HepG2 (cell line): ENCODE measurements at regions of chr15 and their contacts with region 1.

Region 1: GRCh38 chr15:71651750-71652186 is 158.6 kb upstream of the NR2E3 start:
- DNase-seq: peak; percentile 57
- ATAC-seq: peak; percentile 54; the same call in 2 of the 3 replicates
- H3K4me3 ChIP-seq: no peak overlapping the region; a peak in 1 of 6 replicates
- H3K27ac ChIP-seq: no peak overlapping the region
- H3K4me1 ChIP-seq: peaks cover 56% of the 10 kb centered on the region
- H3K27me3 ChIP-seq: peaks cover 0 to 8% of the 10 kb centered on the region in 2 experiments; a peak in 1 of 5 replicates
- CTCF ChIP-seq: peak; percentile 75
- EP300 ChIP-seq: no peak
- POLR2A ChIP-seq: no peak
- RAD21 ChIP-seq: peak; percentile 51

Region 2: GRCh38 chr15:71575474-71576045 is 76.2 kb before region 1 on chr15:
- CTCF ChIA-PET with region 1: interaction called, 3 read pairs
- POLR2A ChIA-PET with region 1: no interaction called
- in situ Hi-C with region 1: no loop called
- intact Hi-C with region 1: loop called (anchors 1 kb)
- DNase-seq: peak; percentile 10
- ATAC-seq: no peak
- H3K4me3 ChIP-seq: no peak overlapping the region
- H3K27ac ChIP-seq: no peak overlapping the region
- H3K4me1 ChIP-seq: no peaks in the 10 kb centered on the region
- H3K27me3 ChIP-seq: no peaks in the 10 kb centered on the region
- CTCF ChIP-seq: peak; percentile 63
- EP300 ChIP-seq: no peak
- POLR2A ChIP-seq: no peak
- RAD21 ChIP-seq: peak; percentile 28; the same call in 1 of the 2 replicates

Region 3: DNA sequence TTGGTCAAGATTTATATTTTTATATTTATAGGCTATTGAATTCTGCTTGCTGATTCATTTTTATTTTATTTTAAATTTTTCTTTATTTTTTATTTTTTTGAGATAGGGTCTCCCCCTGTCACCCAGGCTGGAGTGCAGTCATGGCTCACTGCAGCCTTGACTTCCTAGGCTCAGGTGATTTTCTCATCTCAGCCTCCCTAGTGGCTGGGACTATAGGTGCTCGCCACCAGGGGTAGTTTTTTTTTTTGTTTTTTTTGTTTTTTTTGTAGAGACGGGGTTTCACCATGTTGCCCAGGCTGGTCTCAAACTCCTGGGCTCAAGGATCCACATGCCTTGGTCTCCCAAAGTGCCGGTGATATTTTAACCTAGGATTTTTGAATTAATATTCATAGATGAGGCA is 189.8 kb after region 1 on chr15:
- CTCF ChIA-PET with region 1: no interaction called
- POLR2A ChIA-PET with region 1: no interaction called
- in situ Hi-C with region 1: no loop called
- intact Hi-C with region 1: no loop called
- DNase-seq: no peak
- ATAC-seq: no peak
- H3K4me3 ChIP-seq: no peak overlapping the region
- H3K27ac ChIP-seq: no peak overlapping the region
- H3K4me1 ChIP-seq: no peaks in the 10 kb centered on the region
- H3K27me3 ChIP-seq: no peaks in the 10 kb centered on the region
- CTCF ChIP-seq: no peak
- EP300 ChIP-seq: no peak
- POLR2A ChIP-seq: no peak
- RAD21 ChIP-seq: no peak